Heart left ventricle (tissue), 16 donors: ENCODE measurements at regions of chr1 and their contacts with region 1.

Region 1: GRCh38 chr1:91617285-91617765 is 116.7 kb downstream of the CDC7 start:
- DNase-seq: peak in 4 of 5 donors; percentile 39 to 71 (median 51)
- ATAC-seq: peak; percentile 67 to 85 (median 74)
- H3K4me3 ChIP-seq: no peak overlapping the region
- H3K27ac ChIP-seq: peak overlapping the region in 3 of 12 donors; percentile 10 to 26 (median 21)
- H3K4me1 ChIP-seq: peaks cover 0 to 19% (median under 1%) of the 10 kb centered on the region in 12 donors
- H3K27me3 ChIP-seq: no peaks in the 10 kb centered on the region
- CTCF ChIP-seq: peak in 7 of 12 donors; percentile 9 to 34 (median 24)
- POLR2A ChIP-seq: no peak

Region 2: GRCh38 chr1:91591175-91591968 is 26.0 kb before region 1 on chr1:
- intact Hi-C with region 1: no loop called
- DNase-seq: no peak
- ATAC-seq: peak; percentile 45 to 72 (median 60)
- H3K4me3 ChIP-seq: peak overlapping the region in 1 of 12 donors; percentile 20
- H3K27ac ChIP-seq: peak overlapping the region in 2 of 12 donors; percentile 50 to 52
- H3K4me1 ChIP-seq: peaks cover 0 to 32% (median 6%) of the 10 kb centered on the region in 12 donors
- H3K27me3 ChIP-seq: no peaks in the 10 kb centered on the region
- CTCF ChIP-seq: no peak
- POLR2A ChIP-seq: no peak

Region 3: DNA sequence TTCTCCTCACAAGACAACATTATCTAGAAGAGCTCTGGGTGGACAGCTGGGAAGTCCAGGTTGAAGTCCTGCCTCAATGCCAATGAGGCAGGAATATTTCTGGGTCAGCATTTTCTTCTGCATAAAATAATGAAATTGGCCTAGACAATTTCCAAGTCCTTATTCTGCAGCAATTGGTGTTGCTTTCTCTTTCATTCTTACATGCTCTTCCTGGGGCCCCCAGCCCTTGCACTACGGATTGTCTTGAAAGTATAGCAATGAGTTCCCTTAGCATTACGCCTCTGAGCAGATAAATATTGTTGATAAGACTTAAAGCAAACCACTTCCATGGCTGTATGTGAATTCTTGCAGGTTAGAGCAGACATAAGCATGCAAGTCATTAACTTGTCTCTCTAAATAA is 80.1 kb after region 1 on chr1:
- intact Hi-C with region 1: no loop called
- DNase-seq: no peak
- ATAC-seq: no peak
- H3K4me3 ChIP-seq: no peak overlapping the region
- H3K27ac ChIP-seq: peak overlapping the region in 6 of 12 donors; percentile 23 to 78 (median 34)
- H3K4me1 ChIP-seq: peaks cover 0 to 85% (median 49%) of the 10 kb centered on the region in 12 donors
- H3K27me3 ChIP-seq: no peaks in the 10 kb centered on the region
- CTCF ChIP-seq: no peak
- POLR2A ChIP-seq: no peak

Region 4: DNA sequence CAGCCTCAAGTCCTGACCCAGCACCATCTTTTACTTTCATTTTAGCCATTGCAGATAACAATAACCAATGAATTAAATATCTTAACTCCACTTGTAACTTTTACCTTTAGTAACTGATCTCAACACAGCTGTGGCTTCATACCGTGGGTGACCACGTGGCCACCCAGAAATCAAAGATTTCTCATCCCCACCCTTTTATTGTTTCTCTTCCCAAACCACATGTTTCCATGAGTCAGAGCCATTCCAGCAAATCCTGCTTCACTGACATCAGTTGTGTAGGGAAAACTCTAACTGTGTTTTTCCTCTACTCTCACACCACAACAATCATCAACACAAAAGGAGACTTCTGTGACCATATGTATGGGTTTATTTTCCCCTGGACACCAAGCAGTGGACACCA is 306.8 kb after region 1 on chr1:
- intact Hi-C with region 1: loop called in 1 of 10 experiments (anchors 10 kb)
- DNase-seq: no peak
- ATAC-seq: peak in 2 of 4 donors; percentile 33 to 56
- H3K4me3 ChIP-seq: no peak overlapping the region
- H3K27ac ChIP-seq: no peak overlapping the region
- H3K4me1 ChIP-seq: peaks cover 0 to 3% (median 0%) of the 10 kb centered on the region in 12 donors
- H3K27me3 ChIP-seq: no peaks in the 10 kb centered on the region
- CTCF ChIP-seq: no peak
- POLR2A ChIP-seq: no peak

Region 5: DNA sequence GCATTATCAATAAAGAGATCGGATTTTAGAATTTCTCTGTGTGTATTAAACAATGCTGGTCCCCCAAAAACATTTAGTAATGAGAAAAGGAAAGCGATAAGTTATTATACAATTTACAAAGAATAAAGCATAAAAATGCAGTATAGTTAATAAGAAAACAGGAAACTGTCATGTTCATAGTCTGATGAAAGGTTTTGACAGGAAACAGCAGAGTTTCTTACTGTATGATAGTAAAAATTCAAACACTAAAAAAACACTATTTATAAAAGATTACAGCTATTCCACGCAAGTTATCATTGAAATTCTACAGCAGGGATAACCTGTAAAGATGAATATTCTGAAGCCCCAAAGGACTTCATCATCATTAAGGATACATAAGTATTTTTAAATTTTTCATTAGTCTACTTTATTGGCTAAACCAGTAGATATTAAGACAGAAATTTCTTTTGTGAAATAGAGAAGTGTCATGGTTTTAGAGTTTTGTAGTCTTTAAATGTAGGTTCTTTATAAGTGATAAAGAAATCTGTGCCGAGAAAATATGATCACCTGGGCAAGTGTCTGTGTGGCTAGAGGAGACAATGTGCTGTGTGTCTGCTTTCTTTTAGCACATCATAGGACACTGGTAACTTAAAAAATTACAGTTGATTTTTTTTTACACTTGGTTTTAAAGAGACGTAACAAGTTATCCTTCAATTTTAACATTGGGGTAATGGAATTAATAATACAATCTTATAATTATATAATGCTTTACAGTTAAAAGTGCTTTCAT is 919.1 kb after region 1 on chr1:
- intact Hi-C with region 1: no loop called
- DNase-seq: no peak
- ATAC-seq: no peak
- H3K4me3 ChIP-seq: no peak overlapping the region
- H3K27ac ChIP-seq: peak overlapping the region in 1 of 12 donors; percentile 56
- H3K4me1 ChIP-seq: peaks cover 0 to 33% (median under 1%) of the 10 kb centered on the region in 12 donors
- H3K27me3 ChIP-seq: no peaks in the 10 kb centered on the region
- CTCF ChIP-seq: no peak
- POLR2A ChIP-seq: no peak